Panc1 (cell line): ENCODE measurements at regions of chr19 and their contacts with region 1.

Region 1: DNA sequence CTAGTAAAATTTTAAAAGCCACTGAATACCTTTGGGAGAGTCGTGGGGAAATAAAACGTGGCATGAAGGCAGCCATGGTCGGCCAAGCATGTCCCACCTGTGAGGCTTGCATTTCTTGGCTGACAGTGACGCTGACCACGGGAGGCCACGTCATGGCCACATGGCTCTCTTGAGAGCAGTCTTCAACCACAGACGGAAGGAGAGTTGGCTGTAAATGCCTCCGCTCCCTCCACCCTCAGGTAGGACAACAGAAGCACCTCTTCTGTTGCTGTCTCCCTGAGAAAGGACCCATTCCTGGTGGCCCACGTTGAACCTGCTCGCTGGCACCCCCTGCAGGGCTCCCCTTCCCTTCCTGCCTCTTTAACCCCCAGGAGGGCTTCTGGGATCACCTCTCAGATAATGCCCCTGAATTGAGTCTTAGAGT is 10.6 kb upstream of the LRRC25 start:
- DNase-seq: no peak
- ATAC-seq: no peak
- H3K4me3 ChIP-seq: no peak overlapping the region
- H3K27ac ChIP-seq: peak overlapping the region; percentile 29; the same call in 1 of the 2 replicates
- H3K4me1 ChIP-seq: no peaks in the 10 kb centered on the region
- H3K27me3 ChIP-seq: no peaks in the 10 kb centered on the region
- CTCF ChIP-seq: peak; percentile 68

Region 2: GRCh38 chr19:18135712-18136584 is 272.1 kb before region 1 on chr19:
- CTCF ChIA-PET with region 1: no interaction called
- POLR2A ChIA-PET with region 1: no interaction called
- in situ Hi-C with region 1: no loop called
- intact Hi-C with region 1: no loop called
- DNase-seq: no peak
- ATAC-seq: no peak
- H3K4me3 ChIP-seq: no peak overlapping the region
- H3K27ac ChIP-seq: no peak overlapping the region
- H3K4me1 ChIP-seq: no peaks in the 10 kb centered on the region
- H3K27me3 ChIP-seq: no peaks in the 10 kb centered on the region
- CTCF ChIP-seq: no peak

Region 3: GRCh38 chr19:18349524-18350128 is 58.4 kb before region 1 on chr19:
- CTCF ChIA-PET with region 1: no interaction called
- POLR2A ChIA-PET with region 1: no interaction called
- in situ Hi-C with region 1: no loop called
- intact Hi-C with region 1: loop called (anchors 2 kb)
- DNase-seq: no peak
- ATAC-seq: peak; percentile 87
- H3K4me3 ChIP-seq: no peak overlapping the region
- H3K27ac ChIP-seq: peak overlapping the region; percentile 72; the same call in 1 of the 2 replicates
- H3K4me1 ChIP-seq: no peaks in the 10 kb centered on the region
- H3K27me3 ChIP-seq: no peaks in the 10 kb centered on the region
- CTCF ChIP-seq: peak; percentile 89

Region 4: DNA sequence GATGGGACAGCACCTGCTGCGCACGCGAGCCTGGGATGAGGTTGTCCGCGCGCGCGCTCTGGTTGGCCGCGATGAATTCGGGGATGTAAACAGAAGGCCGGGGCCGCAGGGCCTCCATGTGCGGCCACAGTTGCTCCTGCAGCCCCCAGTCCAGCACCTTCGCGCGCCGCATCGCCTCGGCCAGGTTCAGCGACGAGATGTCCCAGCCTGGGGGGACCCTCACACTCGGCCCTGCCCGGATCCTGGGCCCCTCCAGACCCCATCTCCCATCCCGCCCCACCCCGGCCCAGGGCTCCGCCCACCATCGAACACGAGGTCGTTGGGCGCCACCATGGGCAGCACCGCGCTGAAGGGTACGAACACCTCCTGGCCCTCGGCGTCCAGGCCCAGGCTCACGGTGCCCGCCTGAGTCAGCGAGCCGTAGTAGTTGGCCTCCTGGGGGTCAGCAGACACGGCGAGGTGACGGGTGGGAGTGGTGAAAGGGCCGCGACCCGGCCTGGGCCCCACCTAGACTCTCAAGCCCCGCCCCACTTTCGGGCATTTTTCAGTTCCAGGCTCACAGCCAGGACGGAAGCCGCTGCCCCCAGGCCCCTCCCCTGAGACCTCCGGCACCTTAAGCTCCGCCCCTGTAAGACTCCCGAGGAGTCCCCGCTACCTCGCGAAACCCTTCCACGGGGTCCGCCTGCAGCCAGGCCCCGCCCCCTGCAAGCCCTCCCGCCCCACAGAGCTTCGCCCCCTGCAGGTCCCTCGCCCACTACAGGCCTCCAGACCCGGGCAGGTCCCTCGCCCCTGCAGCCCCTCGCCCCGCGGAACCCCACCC is 28.8 kb after region 1 on chr19:
- CTCF ChIA-PET with region 1: no interaction called
- POLR2A ChIA-PET with region 1: no interaction called
- in situ Hi-C with region 1: no loop called
- intact Hi-C with region 1: no loop called
- DNase-seq: no peak
- ATAC-seq: peak; percentile 35
- H3K4me3 ChIP-seq: peak overlapping the region; percentile 45 to 65
- H3K27ac ChIP-seq: peak overlapping the region; percentile 77
- H3K4me1 ChIP-seq: peaks cover 45% of the 10 kb centered on the region
- H3K27me3 ChIP-seq: no peaks in the 10 kb centered on the region
- CTCF ChIP-seq: no peak

Region 5: DNA sequence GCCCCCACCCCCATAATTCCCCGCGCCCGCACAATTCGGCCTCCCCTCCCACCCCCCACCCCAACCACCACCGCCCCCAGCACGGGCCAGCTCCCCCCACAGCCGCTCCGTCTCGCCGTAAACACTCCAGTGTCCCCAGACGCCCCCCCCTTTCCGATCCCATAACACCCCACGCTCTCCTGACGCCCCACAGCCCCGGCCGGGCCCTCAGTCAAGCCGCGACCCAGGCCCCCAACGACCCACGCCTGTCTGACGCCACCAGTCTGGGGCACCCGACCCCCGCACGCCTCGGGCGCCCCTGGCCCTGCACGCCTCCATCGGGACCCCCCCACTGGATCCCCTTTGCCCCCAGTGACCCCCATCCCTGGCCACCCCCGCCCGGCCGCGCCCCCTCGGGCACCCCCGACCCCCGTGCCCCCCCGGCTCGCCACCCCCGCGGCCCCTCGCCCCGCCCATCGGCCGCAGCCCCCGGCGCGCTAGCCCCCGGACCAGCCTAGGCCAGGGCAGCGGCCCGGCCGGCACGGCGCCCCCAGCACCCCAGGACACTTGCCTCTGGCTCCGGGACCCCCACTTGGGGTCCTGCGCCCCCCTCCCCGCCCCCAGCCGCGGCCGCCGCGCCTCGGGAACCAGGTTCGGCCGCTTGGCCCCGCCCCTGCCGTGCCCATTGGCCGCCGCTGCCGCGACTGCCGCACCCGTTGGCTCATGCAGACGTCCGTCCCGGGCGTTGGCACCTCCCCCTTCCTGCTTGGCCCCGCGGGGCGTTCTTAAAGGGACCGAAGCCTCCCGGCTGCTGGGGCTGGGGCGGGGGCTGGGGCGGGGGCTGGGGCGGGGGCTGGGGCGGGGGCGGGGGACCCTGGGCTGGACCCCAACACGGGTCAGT is 135.1 kb after region 1 on chr19 and contains the start of gene FKBP8:
- CTCF ChIA-PET with region 1: no interaction called
- POLR2A ChIA-PET with region 1: no interaction called
- in situ Hi-C with region 1: no loop called
- intact Hi-C with region 1: no loop called
- DNase-seq: no peak
- ATAC-seq: peak; percentile 99
- H3K4me3 ChIP-seq: peak within 1 kb of the TSS; percentile 52 to 55
- H3K27ac ChIP-seq: peak within 1 kb of the TSS; percentile 77
- H3K4me1 ChIP-seq: peaks cover 11% of the 10 kb centered on the region; the same call in 1 of the 2 replicates
- H3K27me3 ChIP-seq: no peaks in the 10 kb centered on the region
- CTCF ChIP-seq: no peak
- total RNA-seq, gene FKBP8: 182 TPM